ENCODE measurements at regions of chr13 and their contacts with region 1.

Region 1: GRCh38 chr13:41075034-41075433 is 13.7 kb downstream of the WBP4 start:
- DNase-seq: no peak
- ATAC-seq: no peak
- H3K4me3 ChIP-seq: no peak overlapping the region
- H3K27ac ChIP-seq: no peak overlapping the region
- H3K4me1 ChIP-seq: peaks cover 0 to 4% of the 10 kb centered on the region in 2 donors
- H3K27me3 ChIP-seq: no peaks in the 10 kb centered on the region
- CTCF ChIP-seq: peak; percentile 21 to 58 (median 42)
- POLR2A ChIP-seq: no peak

Region 2: GRCh38 chr13:40221460-40222201 is 853.4 kb before region 1 on chr13:
- in situ Hi-C with region 1: no loop called
- intact Hi-C with region 1: no loop called
- DNase-seq: peak; percentile 55 to 68
- ATAC-seq: peak; percentile 96 to 98
- H3K4me3 ChIP-seq: no peak overlapping the region
- H3K27ac ChIP-seq: peak overlapping the region; percentile 76 to 81 (median 78)
- H3K4me1 ChIP-seq: peaks cover 13 to 26% of the 10 kb centered on the region in 2 donors
- H3K27me3 ChIP-seq: no peaks in the 10 kb centered on the region
- CTCF ChIP-seq: no peak
- POLR2A ChIP-seq: no peak

Region 3: GRCh38 chr13:40749327-40749726 is 325.7 kb before region 1 on chr13:
- in situ Hi-C with region 1: no loop called
- intact Hi-C with region 1: no loop called
- DNase-seq: no peak
- ATAC-seq: no peak
- H3K4me3 ChIP-seq: no peak overlapping the region
- H3K27ac ChIP-seq: no peak overlapping the region
- H3K4me1 ChIP-seq: no peaks in the 10 kb centered on the region
- H3K27me3 ChIP-seq: no peaks in the 10 kb centered on the region
- CTCF ChIP-seq: no peak
- POLR2A ChIP-seq: no peak

Region 4: GRCh38 chr13:41150058-41150457 is 75.0 kb after region 1 on chr13:
- in situ Hi-C with region 1: no loop called
- intact Hi-C with region 1: no loop called
- DNase-seq: no peak
- ATAC-seq: no peak
- H3K4me3 ChIP-seq: no peak overlapping the region
- H3K27ac ChIP-seq: no peak overlapping the region
- H3K4me1 ChIP-seq: no peaks in the 10 kb centered on the region
- H3K27me3 ChIP-seq: no peaks in the 10 kb centered on the region
- CTCF ChIP-seq: no peak
- POLR2A ChIP-seq: no peak

Region 5: GRCh38 chr13:41222259-41222852 is 147.3 kb after region 1 on chr13:
- in situ Hi-C with region 1: loop called in 3 of 4 experiments (anchors 5 to 10 kb)
- intact Hi-C with region 1: loop called (anchors 1 kb)
- DNase-seq: peak; percentile 18 to 37
- ATAC-seq: peak; percentile 50 to 91
- H3K4me3 ChIP-seq: no peak overlapping the region
- H3K27ac ChIP-seq: no peak overlapping the region
- H3K4me1 ChIP-seq: no peaks in the 10 kb centered on the region
- H3K27me3 ChIP-seq: no peaks in the 10 kb centered on the region
- CTCF ChIP-seq: peak; percentile 53 to 82 (median 71)
- POLR2A ChIP-seq: no peak